Activated T-helper 2 cell treated with anti-CD3 and anti-CD28 coated beads, Interferon-gamma antibody, Interleukin-2, Interleukin-4, amounts not matched to agents 10 μg/mL and 5 μg/mL and 100 μg/mL, durations not matched to agents 14 hours and 24 hours and 36 hours (primary cell): ENCODE measurements at regions of chr19 and their contacts with region 1.

Region 1: GRCh38 chr19:37906869-37907734 is at the start of gene SIPA1L3:
- DNase-seq: peak; percentile 92
- H3K4me3 Mint-ChIP-seq: peak within 1 kb of the TSS; percentile 83
- H3K27ac Mint-ChIP-seq: peak within 1 kb of the TSS; percentile 60
- H3K4me1 Mint-ChIP-seq: peaks cover 17% of the 10 kb centered on the region
- H3K27me3 Mint-ChIP-seq: peaks cover 4% of the 10 kb centered on the region
- total RNA-seq, gene SIPA1L3: 15.6 and 15.9 TPM in 2 replicates

Region 2: GRCh38 chr19:36054119-36054732 is 1852.9 kb before region 1 on chr19 and contains the start of gene THAP8:
- intact Hi-C with region 1: loop called (anchors 10 kb)
- DNase-seq: peak; percentile 100
- H3K4me3 Mint-ChIP-seq: peak within 1 kb of the TSS; percentile 98
- H3K27ac Mint-ChIP-seq: peak within 1 kb of the TSS; percentile 96
- H3K4me1 Mint-ChIP-seq: peaks cover 20% of the 10 kb centered on the region
- H3K27me3 Mint-ChIP-seq: no peaks in the 10 kb centered on the region
- total RNA-seq, gene THAP8: 1.8 and 2.2 TPM in 2 replicates

Region 3: GRCh38 chr19:37370880-37371661 is 536.0 kb before region 1 on chr19 and contains the start of gene ZNF527:
- intact Hi-C with region 1: loop called (anchors 5 kb)
- DNase-seq: peak; percentile 96
- H3K4me3 Mint-ChIP-seq: peak within 1 kb of the TSS; percentile 90
- H3K27ac Mint-ChIP-seq: peak within 1 kb of the TSS; percentile 79
- H3K4me1 Mint-ChIP-seq: peaks cover 11% of the 10 kb centered on the region
- H3K27me3 Mint-ChIP-seq: no peaks in the 10 kb centered on the region
- total RNA-seq, gene ZNF527: 3.2 TPM in 2 replicates

Region 4: GRCh38 chr19:37867831-37868230 is 39.3 kb before region 1 on chr19:
- intact Hi-C with region 1: no loop called
- DNase-seq: no peak
- H3K4me3 Mint-ChIP-seq: no peak overlapping the region
- H3K27ac Mint-ChIP-seq: no peak overlapping the region
- H3K4me1 Mint-ChIP-seq: no peaks in the 10 kb centered on the region
- H3K27me3 Mint-ChIP-seq: no peaks in the 10 kb centered on the region

Region 5: DNA sequence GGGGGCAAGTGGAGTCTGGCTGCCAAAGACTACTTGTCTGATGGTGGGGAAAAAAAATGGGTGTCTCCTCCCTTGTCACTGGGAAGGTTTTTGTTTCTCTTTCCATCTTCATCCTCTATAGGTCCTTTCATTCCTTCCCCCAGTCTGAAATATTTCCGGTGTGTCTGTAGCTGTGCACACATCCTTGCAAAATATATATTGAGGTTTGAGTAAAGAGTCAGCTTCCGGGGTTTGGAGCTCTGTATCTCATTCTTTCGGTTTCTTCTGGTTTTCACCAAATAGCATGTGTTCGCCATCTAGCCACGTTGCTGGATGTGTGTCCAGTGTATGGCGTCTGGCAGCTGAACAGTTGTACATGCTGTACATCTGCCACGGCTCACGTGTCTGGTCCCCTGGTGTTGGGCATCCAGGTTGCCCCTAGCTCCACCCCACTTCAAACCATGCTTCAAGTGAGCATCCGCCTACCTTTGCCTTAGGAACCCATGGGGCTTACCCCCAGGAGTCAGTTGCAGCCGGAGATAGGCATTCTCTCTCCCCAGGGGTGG is 142.1 kb after region 1 on chr19:
- intact Hi-C with region 1: loop called (anchors 1 kb)
- DNase-seq: peak; percentile 57
- H3K4me3 Mint-ChIP-seq: peak overlapping the region; percentile 74
- H3K27ac Mint-ChIP-seq: peak overlapping the region; percentile 96
- H3K4me1 Mint-ChIP-seq: peaks cover 31% of the 10 kb centered on the region
- H3K27me3 Mint-ChIP-seq: no peaks in the 10 kb centered on the region

Region 6: DNA sequence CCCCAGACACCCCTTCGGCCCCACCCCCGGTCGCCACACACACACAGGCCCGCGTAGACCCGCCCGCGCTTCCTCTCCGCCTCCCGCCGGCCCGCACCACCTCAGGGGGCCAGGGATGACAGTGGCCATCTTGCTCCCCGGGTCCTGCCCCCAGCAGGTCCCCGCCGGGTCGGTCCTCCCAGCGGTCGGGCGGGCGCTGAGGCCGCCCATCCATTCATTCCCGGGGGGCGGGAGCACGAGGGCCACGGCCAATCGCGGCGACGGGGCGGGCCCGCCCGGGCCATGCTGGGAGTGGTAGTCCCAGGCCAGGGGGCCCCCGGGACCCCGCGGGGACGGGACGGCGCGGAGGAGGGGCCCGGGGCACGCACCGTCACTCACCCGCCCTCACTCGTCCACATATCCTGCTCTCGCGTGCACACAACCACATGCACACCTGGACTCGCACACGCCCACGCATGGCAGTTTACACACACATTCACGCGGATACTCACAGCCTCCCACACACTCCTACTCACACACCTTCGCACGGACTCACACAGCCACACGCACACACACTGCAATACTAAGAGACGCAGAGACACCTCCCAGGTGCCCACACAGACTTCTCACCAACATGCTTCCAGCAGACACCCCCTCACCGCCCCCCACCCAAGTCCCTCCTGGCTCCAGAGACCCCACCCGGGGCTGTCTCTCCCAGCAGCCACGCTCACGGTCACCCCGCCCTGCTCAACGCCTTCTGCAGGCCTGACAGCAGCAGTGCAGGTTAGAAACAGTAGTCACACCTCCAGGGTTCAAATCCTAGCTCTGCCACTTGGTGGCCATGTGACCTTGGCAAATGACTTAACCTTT is 317.1 kb after region 1 on chr19 and contains the start of gene DPF1:
- intact Hi-C with region 1: loop called (anchors 5 kb)
- DNase-seq: peak; percentile 49
- H3K4me3 Mint-ChIP-seq: peak within 1 kb of the TSS; percentile 78
- H3K27ac Mint-ChIP-seq: peak within 1 kb of the TSS; percentile 48
- H3K4me1 Mint-ChIP-seq: peaks cover 14% of the 10 kb centered on the region
- H3K27me3 Mint-ChIP-seq: peaks cover 46% of the 10 kb centered on the region
- total RNA-seq, gene DPF1: 3.2 and 3.4 TPM in 2 replicates